ENCODE measurements at regions of chr10 and their contacts with region 1.

Region 1: DNA sequence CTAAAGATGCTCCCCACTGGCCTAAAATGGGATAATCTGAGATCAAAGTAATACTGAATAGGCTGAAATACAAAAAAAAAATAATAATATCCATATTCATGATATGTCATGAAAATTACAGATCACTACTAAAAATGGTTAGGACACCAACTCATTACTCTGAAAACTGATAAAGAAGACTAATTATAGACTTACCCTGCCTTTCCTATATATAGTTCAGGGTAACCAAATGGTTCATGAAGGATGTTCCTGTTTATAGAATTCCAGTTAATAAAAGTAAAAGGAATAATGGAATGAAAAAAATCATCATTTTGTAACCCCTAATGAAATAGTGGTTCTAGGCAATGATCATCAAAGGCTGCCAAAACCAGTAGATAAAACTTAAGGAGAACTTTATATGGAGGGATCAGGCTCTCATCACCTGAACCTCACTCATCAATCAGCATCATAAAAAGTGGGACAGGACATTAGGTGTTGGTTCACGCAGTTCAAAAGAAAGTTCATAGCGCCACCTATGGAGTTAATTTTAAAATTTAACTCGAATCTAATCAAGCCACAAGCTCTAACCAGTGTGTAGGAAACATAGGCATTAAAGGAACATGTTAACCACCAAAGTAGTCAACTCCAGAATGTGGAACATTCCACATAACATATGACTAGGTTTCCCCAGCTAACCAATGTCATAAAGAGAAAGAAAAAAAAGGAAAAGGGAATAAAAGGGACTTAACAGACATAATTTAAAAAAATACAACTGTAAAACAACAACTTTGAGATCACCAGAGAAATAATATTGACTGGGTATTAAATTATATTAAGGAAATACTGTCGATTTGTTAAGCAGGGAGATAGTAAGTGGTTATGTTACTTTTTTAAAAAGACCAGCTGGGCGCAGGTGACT is 35.7 kb downstream of the P4HA1 start:
- DNase-seq: no peak

Region 2: DNA sequence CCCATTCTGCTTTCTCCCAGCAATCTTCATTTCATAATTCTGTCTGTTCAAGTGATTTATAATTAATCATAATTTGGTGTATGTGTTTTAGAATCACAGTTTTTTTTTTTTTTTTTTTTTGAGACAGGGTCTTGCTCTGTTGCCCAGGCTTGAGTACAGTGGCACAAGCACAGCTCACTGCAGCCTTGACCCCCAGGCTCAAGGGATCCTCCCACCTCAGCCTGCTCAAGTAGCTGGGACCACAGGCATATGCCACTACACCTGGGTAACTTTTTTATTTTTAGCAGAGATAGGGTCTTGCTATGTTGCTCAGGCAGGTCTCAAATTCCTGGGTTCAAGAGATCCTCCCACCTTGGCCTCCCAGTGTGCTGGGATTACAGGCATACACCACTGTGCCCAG is 57.2 kb before region 1 on chr10:
- intact Hi-C with region 1: loop called in 1 of 2 experiments (anchors 2 kb)
- DNase-seq: no peak

Region 3: GRCh38 chr10:73044378-73045285 is 16.4 kb before region 1 on chr10:
- intact Hi-C with region 1: no loop called
- DNase-seq: no peak